MCF 10A (cell line): ENCODE measurements at regions of chr4 and their contacts with region 1.

Region 1: DNA sequence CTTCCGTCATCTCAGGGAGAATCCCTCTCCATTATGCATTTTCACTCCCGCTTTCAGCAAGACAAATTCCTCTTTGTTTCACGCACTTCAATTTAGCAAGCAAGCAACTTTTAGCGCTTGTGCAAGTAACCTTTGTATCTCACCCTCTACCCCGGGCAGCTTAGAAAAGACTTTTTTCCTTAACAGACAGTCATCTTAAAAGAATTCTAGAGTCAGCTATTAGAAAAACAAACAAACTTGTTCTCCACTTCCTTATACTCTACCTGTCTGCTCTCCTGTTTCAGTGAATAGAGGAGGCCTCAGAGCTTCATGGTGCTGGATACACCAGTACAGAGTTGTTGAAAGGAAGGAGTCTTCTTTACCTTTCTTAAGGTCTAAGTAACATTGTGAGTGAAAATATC is 12.1 kb downstream of the TIGD2 start:
- DNase-seq: peak; percentile 56
- H3K4me3 Mint-ChIP-seq: peak overlapping the region; percentile 17
- H3K27ac Mint-ChIP-seq: peak overlapping the region; percentile 93
- H3K4me1 Mint-ChIP-seq: peaks cover 20% of the 10 kb centered on the region
- H3K27me3 Mint-ChIP-seq: no peaks in the 10 kb centered on the region
- CTCF ChIP-seq: no peak

Region 2: GRCh38 chr4:88255111-88255510 is 868.3 kb before region 1 on chr4:
- CTCF ChIA-PET with region 1: no interaction called
- POLR2A ChIA-PET with region 1: no interaction called
- intact Hi-C with region 1: no loop called
- DNase-seq: no peak
- H3K4me3 Mint-ChIP-seq: no peak overlapping the region
- H3K27ac Mint-ChIP-seq: no peak overlapping the region
- H3K4me1 Mint-ChIP-seq: no peaks in the 10 kb centered on the region
- H3K27me3 Mint-ChIP-seq: no peaks in the 10 kb centered on the region
- CTCF ChIP-seq: no peak

Region 3: GRCh38 chr4:88870428-88870827 is 253.0 kb before region 1 on chr4:
- CTCF ChIA-PET with region 1: no interaction called
- POLR2A ChIA-PET with region 1: no interaction called
- intact Hi-C with region 1: no loop called
- DNase-seq: no peak
- H3K4me3 Mint-ChIP-seq: no peak overlapping the region
- H3K27ac Mint-ChIP-seq: no peak overlapping the region
- H3K4me1 Mint-ChIP-seq: peaks cover 7% of the 10 kb centered on the region
- H3K27me3 Mint-ChIP-seq: no peaks in the 10 kb centered on the region
- CTCF ChIP-seq: no peak

Region 4: GRCh38 chr4:89110986-89111832 is 12.2 kb before region 1 on chr4 and contains the start of gene TIGD2:
- CTCF ChIA-PET with region 1: interaction called, 7 read pairs
- POLR2A ChIA-PET with region 1: interaction called, 19 read pairs
- intact Hi-C with region 1: no loop called
- DNase-seq: peak; percentile 90
- H3K4me3 Mint-ChIP-seq: peak within 1 kb of the TSS; percentile 79
- H3K27ac Mint-ChIP-seq: peak within 1 kb of the TSS; percentile 61
- H3K4me1 Mint-ChIP-seq: peaks cover 11% of the 10 kb centered on the region
- H3K27me3 Mint-ChIP-seq: no peaks in the 10 kb centered on the region
- CTCF ChIP-seq: peak; percentile 79
- total RNA-seq, gene TIGD2: 15.1 and 15.5 TPM in 2 replicates

Region 5: GRCh38 chr4:89134775-89135319 is 11.4 kb after region 1 on chr4:
- CTCF ChIA-PET with region 1: interaction called, 4 read pairs
- POLR2A ChIA-PET with region 1: interaction called, 12 read pairs
- intact Hi-C with region 1: no loop called
- DNase-seq: peak; percentile 76
- H3K4me3 Mint-ChIP-seq: no peak overlapping the region
- H3K27ac Mint-ChIP-seq: peak overlapping the region; percentile 89
- H3K4me1 Mint-ChIP-seq: peaks cover 7% of the 10 kb centered on the region
- H3K27me3 Mint-ChIP-seq: no peaks in the 10 kb centered on the region
- CTCF ChIP-seq: no peak